WTC11 (cell line): ENCODE measurements at regions of chr13 and their contacts with region 1.

Region 1: GRCh38 chr13:97948041-97948440 is 5.4 kb upstream of the IPO5 start:
- DNase-seq: no peak
- ATAC-seq: no peak
- H3K4me3 Mint-ChIP-seq: no peak overlapping the region
- H3K27ac Mint-ChIP-seq: no peak overlapping the region
- H3K4me1 Mint-ChIP-seq: no peaks in the 10 kb centered on the region
- H3K27me3 Mint-ChIP-seq: no peaks in the 10 kb centered on the region; the same call in 1 of the 2 replicates
- CTCF ChIP-seq: no peak

Region 2: DNA sequence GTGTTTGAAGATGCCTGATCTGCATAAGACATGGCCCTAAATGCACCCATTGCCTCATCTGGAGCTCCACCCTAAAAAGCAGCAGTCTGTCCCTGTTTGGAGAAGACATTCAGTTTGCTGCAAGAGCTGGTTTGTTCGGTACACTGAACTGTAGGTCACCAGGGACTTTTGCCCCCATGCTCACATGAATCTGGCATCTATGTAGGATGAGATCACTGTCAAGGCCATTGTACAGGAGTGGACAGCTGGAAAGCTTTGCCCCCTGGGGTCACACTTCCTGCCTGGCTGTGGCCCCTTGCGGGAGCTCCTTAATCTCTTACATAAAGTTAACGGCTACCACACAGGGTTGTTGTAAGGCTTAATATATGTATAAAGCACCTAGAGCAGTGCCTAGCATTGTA is 78.4 kb after region 1 on chr13:
- CTCF ChIA-PET with region 1: no interaction called
- POLR2A ChIA-PET with region 1: interaction called, 11 read pairs
- DNase-seq: no peak
- ATAC-seq: peak; percentile 55
- H3K4me3 Mint-ChIP-seq: no peak overlapping the region
- H3K27ac Mint-ChIP-seq: no peak overlapping the region
- H3K4me1 Mint-ChIP-seq: peaks cover 22% of the 10 kb centered on the region
- H3K27me3 Mint-ChIP-seq: no peaks in the 10 kb centered on the region
- CTCF ChIP-seq: no peak